B cell (primary cell): ENCODE measurements at regions of chr11 and their contacts with region 1.

Region 1: DNA sequence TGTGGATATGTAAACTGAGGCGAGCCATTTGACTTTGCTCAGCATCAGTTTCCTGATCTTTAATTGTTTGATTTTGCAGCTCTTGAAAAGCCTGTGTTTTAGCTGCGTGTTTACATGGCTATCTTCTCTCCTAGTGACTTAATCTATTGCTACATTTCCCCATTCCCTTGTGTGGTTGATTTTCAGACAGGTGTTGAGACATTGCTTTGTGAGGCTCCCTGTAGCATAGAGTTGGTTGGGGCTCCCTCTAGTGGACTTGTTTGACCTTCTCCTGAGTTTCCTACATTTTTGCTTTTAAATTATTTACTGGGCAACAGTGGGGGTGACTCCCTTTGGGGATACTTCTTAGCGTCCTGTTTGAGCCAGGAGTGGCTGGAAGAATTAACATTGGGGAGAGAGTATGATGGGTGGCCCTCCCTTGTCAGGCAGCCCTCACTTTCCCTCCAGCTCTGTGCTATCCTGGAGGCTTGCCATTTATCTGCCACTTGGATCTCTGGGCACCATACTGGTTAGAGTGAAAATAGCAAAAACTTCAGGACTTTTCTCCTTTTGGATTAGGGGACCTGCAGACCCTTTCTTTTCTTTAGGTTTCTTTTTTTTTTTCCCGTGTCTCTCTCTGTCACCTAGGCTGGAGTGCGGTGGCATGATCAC is 9.2 kb upstream of the CBL start:
- DNase-seq: peak; percentile 87
- ATAC-seq: peak; percentile 96
- H3K4me3 ChIP-seq: no peak overlapping the region
- H3K4me3 Mint-ChIP-seq: no peak overlapping the region
- H3K27ac ChIP-seq: no peak overlapping the region
- H3K27ac Mint-ChIP-seq: no peak overlapping the region
- H3K4me1 ChIP-seq: no peaks in the 10 kb centered on the region
- H3K4me1 Mint-ChIP-seq: no peaks in the 10 kb centered on the region
- H3K27me3 ChIP-seq: no peaks in the 10 kb centered on the region
- H3K27me3 Mint-ChIP-seq: peaks cover 5% of the 10 kb centered on the region
- CTCF ChIP-seq: peak; percentile 84

Region 2: GRCh38 chr11:118928108-118928870 is 268.7 kb before region 1 on chr11:
- CTCF ChIA-PET with region 1: no interaction called
- POLR2A ChIA-PET with region 1: no interaction called
- intact Hi-C with region 1: no loop called
- DNase-seq: peak; percentile 99
- ATAC-seq: peak; percentile 56
- H3K4me3 ChIP-seq: peak overlapping the region; percentile 32 to 86 (median 66)
- H3K4me3 Mint-ChIP-seq: peak overlapping the region; percentile 99
- H3K27ac ChIP-seq: peak overlapping the region; percentile 96 to 99
- H3K27ac Mint-ChIP-seq: peak overlapping the region; percentile 98
- H3K4me1 ChIP-seq: peaks cover 40 to 58% of the 10 kb centered on the region in 2 donors
- H3K4me1 Mint-ChIP-seq: peaks cover 63% of the 10 kb centered on the region
- H3K27me3 ChIP-seq: no peaks in the 10 kb centered on the region
- H3K27me3 Mint-ChIP-seq: no peaks in the 10 kb centered on the region
- CTCF ChIP-seq: peak; percentile 87

Region 3: GRCh38 chr11:119057000-119057769 is 139.8 kb before region 1 on chr11 and contains the start of gene HYOU1:
- CTCF ChIA-PET with region 1: no interaction called
- POLR2A ChIA-PET with region 1: no interaction called
- intact Hi-C with region 1: loop called (anchors 2 kb)
- DNase-seq: peak; percentile 99
- ATAC-seq: peak; percentile 95
- H3K4me3 ChIP-seq: peak within 1 kb of the TSS; percentile 36 to 95 (median 90)
- H3K4me3 Mint-ChIP-seq: peak within 1 kb of the TSS; percentile 97
- H3K27ac ChIP-seq: peak within 1 kb of the TSS; percentile 75 to 93
- H3K27ac Mint-ChIP-seq: peak within 1 kb of the TSS; percentile 93
- H3K4me1 ChIP-seq: peaks cover 18 to 29% of the 10 kb centered on the region in 2 donors
- H3K4me1 Mint-ChIP-seq: peaks cover 36% of the 10 kb centered on the region
- H3K27me3 ChIP-seq: no peaks in the 10 kb centered on the region
- H3K27me3 Mint-ChIP-seq: no peaks in the 10 kb centered on the region
- CTCF ChIP-seq: peak; percentile 6
- total RNA-seq, gene HYOU1: 46.2 and 48.7 TPM in 2 replicates

Region 4: DNA sequence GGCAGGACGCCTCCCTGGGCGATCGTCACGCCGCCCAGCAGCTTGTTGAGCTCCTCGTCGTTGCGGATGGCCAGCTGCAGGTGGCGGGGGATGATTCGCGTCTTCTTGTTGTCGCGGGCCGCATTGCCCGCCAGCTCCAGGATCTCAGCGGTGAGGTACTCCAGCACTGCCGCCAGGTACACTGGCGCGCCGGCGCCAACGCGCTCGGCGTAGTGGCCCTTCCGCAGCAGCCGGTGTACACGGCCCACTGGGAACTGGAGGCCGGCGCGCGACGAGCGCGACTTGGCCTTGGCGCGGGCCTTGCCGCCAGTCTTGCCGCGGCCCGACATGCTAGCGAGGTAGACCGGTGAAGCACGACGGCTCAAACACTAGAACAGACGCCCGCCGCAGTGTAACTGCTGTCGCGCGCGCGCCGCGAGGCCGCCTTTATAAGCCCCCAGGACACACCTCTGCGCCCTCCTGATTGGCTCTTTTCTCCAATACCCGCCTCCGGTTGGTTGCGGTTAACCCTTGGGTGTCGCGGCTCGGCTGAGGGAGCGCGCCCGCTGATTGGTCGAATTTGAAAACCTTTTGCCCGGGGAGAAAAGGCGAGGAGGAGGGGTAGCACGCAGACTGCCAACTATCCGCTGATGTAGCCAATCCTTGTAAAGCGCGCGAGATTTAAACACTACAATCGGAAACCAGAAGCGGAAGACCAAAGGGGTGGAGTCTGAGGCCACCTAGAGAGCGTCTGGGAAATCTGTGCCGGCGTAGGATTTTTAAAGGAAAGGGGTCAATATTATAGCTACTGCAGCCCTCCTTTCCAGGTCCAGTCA is 101.7 kb before region 1 on chr11:
- CTCF ChIA-PET with region 1: interaction called, 4 read pairs
- POLR2A ChIA-PET with region 1: no interaction called
- intact Hi-C with region 1: loop called (anchors 1 kb)
- DNase-seq: peak; percentile 100
- ATAC-seq: peak; percentile 85
- H3K4me3 ChIP-seq: peak overlapping the region; percentile 42 to 91 (median 85)
- H3K4me3 Mint-ChIP-seq: peak overlapping the region; percentile 96
- H3K27ac ChIP-seq: peak overlapping the region; percentile 69 to 76
- H3K27ac Mint-ChIP-seq: peak overlapping the region; percentile 84
- H3K4me1 ChIP-seq: peaks cover 26 to 43% of the 10 kb centered on the region in 2 donors
- H3K4me1 Mint-ChIP-seq: peaks cover 47% of the 10 kb centered on the region
- H3K27me3 ChIP-seq: no peaks in the 10 kb centered on the region
- H3K27me3 Mint-ChIP-seq: no peaks in the 10 kb centered on the region
- CTCF ChIP-seq: peak; percentile 9

Region 5: DNA sequence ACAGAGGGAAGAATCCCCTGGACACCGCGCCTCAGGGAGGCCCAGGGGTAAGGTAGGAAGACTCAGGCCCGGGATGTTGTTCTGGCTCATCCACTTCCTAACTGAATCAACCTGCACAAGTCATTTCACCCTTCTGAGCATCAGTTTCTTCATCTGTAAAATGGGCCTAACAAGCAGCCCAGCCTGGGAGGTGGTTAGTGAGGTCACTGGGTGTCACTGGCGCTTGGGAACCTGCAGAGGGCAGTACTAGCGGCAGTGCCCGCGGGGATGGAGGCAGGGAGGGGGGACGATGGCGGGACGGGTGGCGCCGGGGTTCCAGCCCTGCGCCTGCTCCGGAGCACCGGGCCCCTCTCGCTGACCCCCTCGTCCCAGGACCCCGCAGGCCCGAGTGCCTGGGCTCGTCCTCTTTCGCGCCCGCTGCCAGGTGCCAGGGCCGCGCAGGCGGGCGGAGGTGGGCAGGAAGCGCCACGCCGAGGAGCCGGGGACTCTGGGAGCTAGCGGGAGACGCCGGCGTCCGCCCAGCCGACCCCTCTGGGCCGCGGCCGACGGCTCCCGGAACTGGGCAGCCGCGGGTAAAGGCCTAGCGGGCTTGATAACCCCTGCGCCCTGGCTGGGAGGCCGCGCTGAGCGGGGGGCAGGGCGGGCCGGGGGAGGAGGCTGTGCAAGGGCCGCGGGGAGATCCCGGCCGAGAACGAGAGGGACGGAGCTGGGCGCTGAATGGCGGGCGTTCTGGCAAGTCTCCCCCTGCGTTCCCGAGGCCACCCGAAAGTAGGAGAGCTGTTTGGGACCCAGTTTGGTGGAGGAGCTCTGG is 28.3 kb before region 1 on chr11 and contains the start of gene NLRX1:
- CTCF ChIA-PET with region 1: interaction called, 10 read pairs
- POLR2A ChIA-PET with region 1: no interaction called
- intact Hi-C with region 1: loop called (anchors 1 kb)
- DNase-seq: peak; percentile 88
- ATAC-seq: peak; percentile 96
- H3K4me3 ChIP-seq: peak within 1 kb of the TSS; percentile 56 to 80 (median 68)
- H3K4me3 Mint-ChIP-seq: peak within 1 kb of the TSS; percentile 92
- H3K27ac ChIP-seq: peak within 1 kb of the TSS; percentile 10 to 65
- H3K27ac Mint-ChIP-seq: peak within 1 kb of the TSS; percentile 81
- H3K4me1 ChIP-seq: peaks cover 5 to 12% of the 10 kb centered on the region in 2 donors
- H3K4me1 Mint-ChIP-seq: peaks cover 4% of the 10 kb centered on the region
- H3K27me3 ChIP-seq: no peaks in the 10 kb centered on the region
- H3K27me3 Mint-ChIP-seq: no peaks in the 10 kb centered on the region
- CTCF ChIP-seq: peak; percentile 88
- total RNA-seq, gene NLRX1: 9.6 and 10.4 TPM in 2 replicates